ENCODE measurements at regions of chr6 and their contacts with region 1.

Region 1: GRCh38 chr6:33711140-33712129 is at the start of gene UQCC2:
- DNase-seq: peak; percentile 96 to 97 (median 96)
- H3K4me3 ChIP-seq: peak within 1 kb of the TSS; percentile 58 to 89
- H3K4me3 Mint-ChIP-seq: peak within 1 kb of the TSS; percentile 96 to 99 (median 98)
- H3K27ac ChIP-seq: peak within 1 kb of the TSS; percentile 84
- H3K27ac Mint-ChIP-seq: peak within 1 kb of the TSS; percentile 93 to 99 (median 98)
- H3K4me1 ChIP-seq: peaks cover 22% of the 10 kb centered on the region
- H3K4me1 Mint-ChIP-seq: peaks cover 20 to 32% (median 27%) of the 10 kb centered on the region in 4 donors
- H3K27me3 ChIP-seq: no peaks in the 10 kb centered on the region
- H3K27me3 Mint-ChIP-seq: no peaks in the 10 kb centered on the region
- total RNA-seq, gene UQCC2: 22.8 to 24.8 TPM

Region 2: DNA sequence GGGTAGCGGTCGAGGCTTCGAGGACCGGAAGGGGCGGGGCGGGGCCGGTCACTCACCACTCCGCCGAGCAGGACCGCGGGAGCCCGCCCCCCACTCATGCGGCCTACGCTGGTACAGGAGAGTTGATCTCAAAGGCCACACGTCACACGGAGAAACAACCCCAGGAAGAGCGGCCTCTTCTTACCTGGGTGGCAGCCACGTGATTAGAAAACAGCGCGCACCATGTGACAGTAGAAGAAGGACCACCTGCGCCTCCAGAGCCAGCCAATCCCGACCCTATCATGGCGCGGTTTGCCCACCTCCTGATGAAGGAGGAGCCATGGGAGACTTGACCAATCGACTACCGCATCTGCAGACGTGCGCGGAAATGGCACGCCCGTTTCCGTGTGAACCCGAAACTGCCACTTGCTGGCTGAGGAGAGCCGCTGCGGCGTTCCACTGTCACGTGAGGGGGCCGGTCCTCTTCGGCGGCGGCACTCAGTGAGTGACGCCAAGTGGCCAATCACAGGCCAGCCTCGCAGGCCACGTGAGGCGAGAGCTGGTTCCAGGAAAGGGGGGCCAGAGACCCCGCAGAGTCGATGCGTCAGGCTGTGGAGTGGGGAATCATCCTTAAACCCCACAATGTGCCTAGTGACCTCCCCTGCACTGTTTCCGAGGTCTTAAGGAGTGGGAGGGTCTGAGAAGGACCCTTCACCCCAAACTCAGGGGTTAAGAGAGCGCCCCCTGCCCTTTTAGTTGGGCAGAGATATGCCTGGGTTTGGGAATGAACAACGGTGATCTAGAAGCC is 293.3 kb before region 1 on chr6 and contains the start of gene CUTA:
- CTCF ChIA-PET with region 1: no interaction called
- POLR2A ChIA-PET with region 1: no interaction called
- intact Hi-C with region 1: loop called (anchors 10 kb)
- DNase-seq: peak; percentile 97 to 100 (median 100)
- H3K4me3 ChIP-seq: peak within 1 kb of the TSS; percentile 82 to 94
- H3K4me3 Mint-ChIP-seq: peak within 1 kb of the TSS; percentile 87 to 97 (median 94)
- H3K27ac ChIP-seq: peak within 1 kb of the TSS; percentile 97
- H3K27ac Mint-ChIP-seq: peak within 1 kb of the TSS; percentile 99 to 100 (median 99)
- H3K4me1 ChIP-seq: peaks cover 72% of the 10 kb centered on the region
- H3K4me1 Mint-ChIP-seq: peaks cover 43 to 87% (median 61%) of the 10 kb centered on the region in 4 donors
- H3K27me3 ChIP-seq: no peaks in the 10 kb centered on the region
- H3K27me3 Mint-ChIP-seq: no peaks in the 10 kb centered on the region
- total RNA-seq, gene CUTA: 210 to 217 TPM

Region 3: DNA sequence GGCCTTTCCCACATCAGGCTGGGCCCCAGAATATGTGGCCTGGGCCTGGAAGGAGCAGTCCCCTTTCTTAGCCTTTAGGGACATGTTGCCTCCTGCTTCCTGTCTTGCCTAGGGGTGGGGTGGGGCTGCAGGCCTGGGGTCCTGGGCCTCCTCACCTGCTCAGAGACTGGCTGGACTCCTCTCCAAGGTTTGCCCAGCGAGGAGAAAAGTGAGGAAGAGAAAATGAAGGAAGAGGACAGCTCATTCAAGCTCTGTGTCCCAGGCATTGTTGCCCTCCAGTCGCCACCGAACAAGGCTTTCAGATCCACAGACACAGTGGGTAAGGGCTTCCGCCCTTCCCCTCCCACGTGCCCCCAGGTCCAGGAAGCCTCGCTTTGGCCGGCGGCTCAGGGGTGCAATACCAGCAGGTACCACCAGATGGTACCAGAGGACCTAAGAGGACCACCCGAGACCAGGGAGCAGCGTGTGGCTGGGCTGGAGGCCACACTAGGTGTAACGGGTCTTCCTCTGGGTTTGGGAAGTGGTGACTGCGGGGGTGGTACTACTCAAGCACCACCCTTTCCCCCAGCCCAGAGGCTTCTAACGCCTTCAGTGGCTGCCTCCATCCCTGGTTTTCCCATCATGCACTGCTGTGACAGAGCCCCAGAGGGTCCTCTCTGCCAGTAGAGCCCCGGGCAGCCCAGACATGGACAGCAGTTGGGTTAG is 125.9 kb before region 1 on chr6:
- CTCF ChIA-PET with region 1: interaction called, 19 read pairs
- POLR2A ChIA-PET with region 1: no interaction called
- intact Hi-C with region 1: no loop called
- DNase-seq: peak; percentile 78 to 89 (median 83)
- H3K4me3 ChIP-seq: no peak overlapping the region
- H3K4me3 Mint-ChIP-seq: peak overlapping the region in 7 of 8 donors; percentile 28 to 66 (median 59)
- H3K27ac ChIP-seq: peak overlapping the region; percentile 47
- H3K27ac Mint-ChIP-seq: peak overlapping the region; percentile 85 to 93 (median 89)
- H3K4me1 ChIP-seq: peaks cover 18% of the 10 kb centered on the region
- H3K4me1 Mint-ChIP-seq: peaks cover 8 to 34% (median 17%) of the 10 kb centered on the region in 4 donors
- H3K27me3 ChIP-seq: no peaks in the 10 kb centered on the region
- H3K27me3 Mint-ChIP-seq: no peaks in the 10 kb centered on the region

Region 4: DNA sequence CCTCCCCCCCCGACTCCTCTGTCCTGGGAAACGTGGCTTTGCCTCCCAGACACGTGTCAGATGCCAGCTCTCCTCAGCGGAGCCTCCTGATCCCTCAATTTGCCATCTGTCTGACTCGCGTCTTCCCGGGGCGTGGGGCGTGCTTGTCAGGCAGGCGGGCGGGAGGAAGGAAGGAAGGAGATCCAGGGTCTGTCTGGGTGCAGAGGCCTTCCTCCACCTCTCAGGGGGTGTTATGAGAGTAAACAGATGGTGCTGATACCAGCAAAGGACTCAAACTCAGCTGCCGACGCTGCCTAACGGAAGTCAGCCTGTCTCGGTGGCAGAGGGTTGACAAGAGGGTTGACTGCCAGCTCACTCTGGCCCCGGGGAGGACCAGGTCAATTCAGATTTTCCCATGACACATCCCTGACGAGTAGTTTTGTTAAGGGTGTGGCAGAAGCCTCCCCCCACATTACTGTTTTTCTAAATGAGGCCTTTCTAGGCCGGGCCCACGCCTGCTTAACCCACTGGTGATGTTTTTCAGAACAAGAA is 17.0 kb before region 1 on chr6:
- CTCF ChIA-PET with region 1: interaction called, 5 read pairs
- POLR2A ChIA-PET with region 1: interaction called, 26 read pairs
- intact Hi-C with region 1: loop called (anchors 1 kb)
- DNase-seq: peak; percentile 58 to 86 (median 67)
- H3K4me3 ChIP-seq: no peak overlapping the region
- H3K4me3 Mint-ChIP-seq: peak overlapping the region in 7 of 8 donors; percentile 69 to 89 (median 69)
- H3K27ac ChIP-seq: peak overlapping the region; percentile 76
- H3K27ac Mint-ChIP-seq: peak overlapping the region; percentile 97 to 99 (median 98)
- H3K4me1 ChIP-seq: peaks cover 65% of the 10 kb centered on the region
- H3K4me1 Mint-ChIP-seq: peaks cover 36 to 84% (median 59%) of the 10 kb centered on the region in 4 donors
- H3K27me3 ChIP-seq: no peaks in the 10 kb centered on the region
- H3K27me3 Mint-ChIP-seq: no peaks in the 10 kb centered on the region

Region 5: GRCh38 chr6:33761922-33762629 is 50.6 kb after region 1 on chr6:
- CTCF ChIA-PET with region 1: interaction called, 14 read pairs
- POLR2A ChIA-PET with region 1: no interaction called
- intact Hi-C with region 1: loop called (anchors 1 kb)
- DNase-seq: peak in 1 of 5 donors; percentile 21
- H3K4me3 ChIP-seq: no peak overlapping the region
- H3K4me3 Mint-ChIP-seq: no peak overlapping the region
- H3K27ac ChIP-seq: no peak overlapping the region
- H3K27ac Mint-ChIP-seq: peak overlapping the region in 1 of 7 donors; percentile 24
- H3K4me1 ChIP-seq: no peaks in the 10 kb centered on the region
- H3K4me1 Mint-ChIP-seq: peaks cover 0 to 1% (median under 1%) of the 10 kb centered on the region in 4 donors
- H3K27me3 ChIP-seq: no peaks in the 10 kb centered on the region
- H3K27me3 Mint-ChIP-seq: peaks cover 3 to 7% of the 10 kb centered on the region in 2 donors

Region 6: DNA sequence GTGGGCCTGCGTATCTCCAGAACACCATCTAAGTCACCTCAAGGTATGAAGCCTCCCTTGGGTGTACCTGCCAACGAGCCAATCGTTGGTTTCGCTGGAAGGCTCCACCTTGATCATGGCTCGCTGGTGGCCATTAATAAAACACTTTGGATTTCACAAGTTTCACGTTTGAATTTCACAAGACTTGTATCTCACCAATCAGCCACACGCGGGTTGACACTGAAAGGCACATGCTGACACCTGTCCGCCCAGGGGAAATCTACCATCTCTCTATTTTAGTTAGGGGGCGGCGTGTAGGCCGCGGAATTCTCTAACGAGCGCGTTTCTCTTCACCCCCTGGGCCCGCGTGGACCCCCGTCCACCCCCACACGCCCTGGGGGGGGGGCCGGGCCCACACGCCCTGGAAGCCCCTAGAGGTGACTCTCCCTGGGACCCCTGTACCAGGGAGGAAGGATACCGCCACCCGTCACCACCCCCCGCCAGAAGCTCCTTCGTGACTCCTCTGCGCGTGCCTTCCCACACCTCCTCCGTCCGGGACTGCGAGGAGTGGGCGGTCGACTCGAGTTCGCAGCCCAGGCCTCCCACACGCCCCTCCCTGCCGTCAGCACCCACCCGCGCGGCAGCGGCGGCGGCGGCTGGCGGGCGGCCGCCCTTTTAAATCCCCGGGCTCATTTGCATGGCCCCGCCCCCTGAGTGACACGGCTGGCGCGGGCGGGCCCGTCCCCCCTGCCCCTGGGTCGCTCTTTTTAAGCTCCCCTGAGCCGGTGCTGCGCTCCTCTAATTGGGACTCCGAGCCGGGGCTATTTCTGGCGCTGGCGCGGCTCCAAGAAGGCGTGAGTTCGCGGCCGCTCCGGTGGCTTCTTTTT is 524.9 kb after region 1 on chr6 and contains the start of gene HMGA1:
- CTCF ChIA-PET with region 1: no interaction called
- POLR2A ChIA-PET with region 1: no interaction called
- intact Hi-C with region 1: loop called (anchors 5 kb)
- DNase-seq: peak; percentile 83 to 92 (median 85)
- H3K4me3 ChIP-seq: peak within 1 kb of the TSS; percentile 57 to 79
- H3K4me3 Mint-ChIP-seq: peak within 1 kb of the TSS; percentile 91 to 99 (median 94)
- H3K27ac ChIP-seq: peak within 1 kb of the TSS; percentile 97
- H3K27ac Mint-ChIP-seq: peak within 1 kb of the TSS; percentile 97 to 100 (median 99)
- H3K4me1 ChIP-seq: peaks cover 28% of the 10 kb centered on the region
- H3K4me1 Mint-ChIP-seq: peaks cover 14 to 48% (median 28%) of the 10 kb centered on the region in 4 donors
- H3K27me3 ChIP-seq: no peaks in the 10 kb centered on the region
- H3K27me3 Mint-ChIP-seq: no peaks in the 10 kb centered on the region
- total RNA-seq, gene HMGA1: 74.7 to 77.5 TPM